Motor neuron (in vitro differentiated cells): ENCODE measurements at regions of chr2 and their contacts with region 1.

Region 1: GRCh38 chr2:159124441-159124911 is 156.0 kb downstream of the TANC1 start:
- ATAC-seq: peak; percentile 67 to 90 (median 82)
- H3K4me3 ChIP-seq: no peak overlapping the region
- H3K27ac ChIP-seq: peak overlapping the region in 1 of 2 donors; percentile 26
- H3K4me1 ChIP-seq: peaks cover 13 to 26% of the 10 kb centered on the region in 2 donors

Region 2: DNA sequence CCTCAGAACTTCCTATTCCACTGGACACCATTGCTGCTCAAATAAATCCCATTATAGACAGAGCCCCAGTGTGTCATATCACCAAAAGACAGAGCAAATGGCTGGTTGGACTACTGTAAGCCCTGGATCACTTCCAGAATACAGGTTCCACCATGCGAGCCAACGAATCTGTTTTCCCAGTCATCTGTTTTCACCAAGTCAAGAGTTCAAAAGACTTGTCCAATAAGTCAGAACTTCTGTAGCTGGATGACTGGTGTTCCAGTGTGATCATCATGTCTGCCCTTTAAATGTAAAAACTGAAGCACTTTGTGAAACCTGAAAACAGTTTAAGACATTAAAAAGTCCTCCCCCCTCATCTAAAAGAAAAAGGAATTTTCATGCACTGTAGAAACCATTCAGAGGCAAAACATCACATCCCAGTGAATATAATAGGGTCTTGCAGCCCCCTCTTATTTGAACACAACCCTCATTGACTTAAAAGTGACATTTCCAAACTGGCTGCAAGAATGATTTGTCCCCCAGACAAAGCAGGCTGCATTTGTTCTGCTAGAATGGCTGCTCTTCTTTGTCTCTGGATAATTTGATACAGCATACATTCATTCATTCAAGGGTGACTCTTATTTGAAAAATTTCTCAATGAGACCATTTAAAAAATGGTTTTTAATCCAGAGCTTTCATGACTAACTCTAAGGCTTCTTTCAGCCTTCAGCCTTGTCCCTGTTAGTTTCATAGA is 220.6 kb before region 1 on chr2:
- in situ Hi-C with region 1: loop called in 4 of 9 experiments (anchors 10 to 25 kb)
- ATAC-seq: peak in 5 of 8 experiments; percentile 80 to 94 (median 89)
- H3K4me3 ChIP-seq: no peak overlapping the region
- H3K27ac ChIP-seq: no peak overlapping the region
- H3K4me1 ChIP-seq: peaks cover 10 to 14% of the 10 kb centered on the region in 2 donors

Region 3: DNA sequence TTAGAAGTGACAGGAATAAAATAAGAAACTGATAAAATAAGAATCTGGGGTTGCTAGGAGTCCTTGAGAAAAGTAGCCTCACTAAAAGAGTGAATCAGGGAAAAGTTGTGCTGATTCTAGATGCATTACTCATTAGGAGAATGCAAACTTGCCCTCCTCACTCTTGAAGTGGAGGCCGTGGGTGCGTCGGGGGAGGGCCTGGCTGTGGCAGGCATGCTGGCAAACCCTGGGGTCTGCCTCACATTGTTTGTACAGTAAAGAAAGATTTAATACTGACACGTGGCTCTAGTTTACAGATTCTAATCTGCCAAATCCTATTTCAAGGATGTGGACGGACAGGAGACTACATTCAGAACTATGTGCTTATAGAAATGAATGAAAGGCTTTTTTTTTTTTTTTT is 114.1 kb before region 1 on chr2:
- in situ Hi-C with region 1: no loop called
- ATAC-seq: peak in 3 of 8 experiments; percentile 68 to 79 (median 75)
- H3K4me3 ChIP-seq: no peak overlapping the region
- H3K27ac ChIP-seq: no peak overlapping the region
- H3K4me1 ChIP-seq: no peaks in the 10 kb centered on the region

Region 4: GRCh38 chr2:159297042-159297695 is 172.7 kb after region 1 on chr2:
- in situ Hi-C with region 1: no loop called
- ATAC-seq: no peak
- H3K4me3 ChIP-seq: no peak overlapping the region
- H3K27ac ChIP-seq: no peak overlapping the region
- H3K4me1 ChIP-seq: peaks cover 0 to 2% of the 10 kb centered on the region in 2 donors